ENCODE measurements at regions of chr7 and their contacts with region 1.

Region 1: DNA sequence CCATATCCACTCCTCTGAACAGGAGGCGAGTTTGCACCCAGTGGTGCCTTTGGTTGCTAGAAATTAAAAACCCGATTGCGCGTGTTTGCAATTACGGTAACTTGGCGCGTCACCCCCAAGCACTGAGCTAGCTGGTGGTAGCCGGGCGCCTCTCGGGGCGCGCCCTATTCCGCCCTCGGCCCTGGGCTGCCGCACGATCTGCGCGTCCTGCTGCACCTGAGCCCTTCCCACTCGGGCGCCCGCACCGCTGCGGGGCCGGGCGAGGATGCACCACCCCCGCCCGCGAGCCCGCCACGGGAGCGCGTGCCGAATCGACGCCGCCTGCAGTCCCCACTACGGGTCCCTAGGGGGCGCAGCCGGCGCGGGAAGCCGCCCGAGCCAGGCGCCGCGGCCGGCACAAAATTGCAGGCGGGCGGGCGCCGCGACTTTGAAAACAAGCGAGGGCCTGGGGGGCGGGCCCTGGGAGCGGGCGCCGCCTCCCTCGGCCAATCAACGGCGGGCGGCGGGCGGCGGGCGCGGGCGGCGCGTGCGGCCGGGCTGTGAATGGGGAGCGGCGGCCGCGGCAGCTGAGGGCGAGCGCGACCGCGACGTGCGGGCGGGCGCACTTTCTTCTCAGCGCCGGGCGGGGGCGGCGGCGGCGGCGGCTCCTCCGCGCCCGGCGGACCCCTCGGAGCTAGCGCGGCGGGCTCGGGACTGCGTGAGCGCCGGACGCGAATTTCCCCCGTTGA is at the start of gene SDK1:
- DNase-seq: peak; percentile 89
- H3K4me3 Mint-ChIP-seq: peak within 1 kb of the TSS; percentile 72
- H3K27ac Mint-ChIP-seq: no peak within 1 kb of the TSS
- H3K4me1 Mint-ChIP-seq: peaks cover 8% of the 10 kb centered on the region
- H3K27me3 Mint-ChIP-seq: peaks cover 17% of the 10 kb centered on the region
- total RNA-seq, gene SDK1: 1.3 to 2.0 TPM

Region 2: DNA sequence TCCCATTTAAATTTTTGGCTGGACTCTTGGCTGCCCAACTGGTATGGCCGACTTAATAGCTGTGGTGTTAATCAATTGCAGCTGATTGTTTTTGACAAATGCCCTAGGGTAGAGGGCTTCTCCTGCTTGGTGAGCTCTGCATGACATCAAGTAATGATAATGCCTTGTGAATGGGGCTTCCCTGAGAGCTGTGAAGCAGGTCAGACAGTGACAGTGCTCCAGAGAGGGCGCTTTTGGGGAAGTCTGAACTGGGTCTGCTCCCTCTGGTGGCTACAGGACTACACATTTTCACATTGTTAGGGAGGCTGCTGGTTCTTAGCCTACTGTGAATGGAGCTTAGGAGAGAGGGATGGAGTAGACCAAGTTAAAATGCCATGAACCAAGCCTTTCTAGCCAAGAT is 99.0 kb after region 1 on chr7:
- CTCF ChIA-PET with region 1: no interaction called
- intact Hi-C with region 1: no loop called
- DNase-seq: peak; percentile 47
- H3K4me3 Mint-ChIP-seq: no peak overlapping the region
- H3K27ac Mint-ChIP-seq: no peak overlapping the region
- H3K4me1 Mint-ChIP-seq: no peaks in the 10 kb centered on the region
- H3K27me3 Mint-ChIP-seq: no peaks in the 10 kb centered on the region

Region 3: DNA sequence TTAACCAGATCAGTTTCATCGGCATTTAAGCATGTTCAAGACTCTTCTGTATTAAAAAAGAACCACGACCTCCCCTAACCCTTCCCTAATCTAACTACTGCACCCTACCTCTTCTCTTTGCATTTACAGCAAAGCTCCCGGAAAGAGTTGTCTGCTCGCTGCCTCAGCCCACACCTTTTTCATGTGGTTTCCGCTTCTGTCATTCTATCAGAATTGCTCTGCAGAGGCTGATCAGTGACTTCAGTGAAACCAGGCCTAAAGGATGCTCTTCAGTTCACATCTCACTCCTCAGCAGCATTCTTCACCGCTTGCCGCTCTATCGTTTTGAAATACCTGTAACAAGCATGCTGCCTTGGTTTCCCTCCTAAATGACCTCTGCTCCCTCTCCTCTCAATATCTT is 161.1 kb after region 1 on chr7:
- CTCF ChIA-PET with region 1: interaction called, 3 read pairs
- intact Hi-C with region 1: loop called (anchors 1 kb)
- DNase-seq: peak; percentile 90
- H3K4me3 Mint-ChIP-seq: peak overlapping the region; percentile 66
- H3K27ac Mint-ChIP-seq: peak overlapping the region; percentile 90
- H3K4me1 Mint-ChIP-seq: peaks cover 54% of the 10 kb centered on the region
- H3K27me3 Mint-ChIP-seq: no peaks in the 10 kb centered on the region

Region 4: GRCh38 chr7:3559278-3559677 is 258.5 kb after region 1 on chr7:
- CTCF ChIA-PET with region 1: no interaction called
- intact Hi-C with region 1: loop called (anchors 5 kb)
- DNase-seq: peak; percentile 41
- H3K4me3 Mint-ChIP-seq: no peak overlapping the region
- H3K27ac Mint-ChIP-seq: no peak overlapping the region
- H3K4me1 Mint-ChIP-seq: peaks cover 23% of the 10 kb centered on the region
- H3K27me3 Mint-ChIP-seq: no peaks in the 10 kb centered on the region

Region 5: GRCh38 chr7:3897438-3898385 is 596.9 kb after region 1 on chr7:
- CTCF ChIA-PET with region 1: interaction called, 3 read pairs
- intact Hi-C with region 1: loop called (anchors 1 kb)
- DNase-seq: peak; percentile 67
- H3K4me3 Mint-ChIP-seq: no peak overlapping the region
- H3K27ac Mint-ChIP-seq: no peak overlapping the region
- H3K4me1 Mint-ChIP-seq: no peaks in the 10 kb centered on the region
- H3K27me3 Mint-ChIP-seq: no peaks in the 10 kb centered on the region